Heart right ventricle (tissue), 16 donors: ENCODE measurements at regions of chrX and their contacts with region 1.

Region 1: DNA sequence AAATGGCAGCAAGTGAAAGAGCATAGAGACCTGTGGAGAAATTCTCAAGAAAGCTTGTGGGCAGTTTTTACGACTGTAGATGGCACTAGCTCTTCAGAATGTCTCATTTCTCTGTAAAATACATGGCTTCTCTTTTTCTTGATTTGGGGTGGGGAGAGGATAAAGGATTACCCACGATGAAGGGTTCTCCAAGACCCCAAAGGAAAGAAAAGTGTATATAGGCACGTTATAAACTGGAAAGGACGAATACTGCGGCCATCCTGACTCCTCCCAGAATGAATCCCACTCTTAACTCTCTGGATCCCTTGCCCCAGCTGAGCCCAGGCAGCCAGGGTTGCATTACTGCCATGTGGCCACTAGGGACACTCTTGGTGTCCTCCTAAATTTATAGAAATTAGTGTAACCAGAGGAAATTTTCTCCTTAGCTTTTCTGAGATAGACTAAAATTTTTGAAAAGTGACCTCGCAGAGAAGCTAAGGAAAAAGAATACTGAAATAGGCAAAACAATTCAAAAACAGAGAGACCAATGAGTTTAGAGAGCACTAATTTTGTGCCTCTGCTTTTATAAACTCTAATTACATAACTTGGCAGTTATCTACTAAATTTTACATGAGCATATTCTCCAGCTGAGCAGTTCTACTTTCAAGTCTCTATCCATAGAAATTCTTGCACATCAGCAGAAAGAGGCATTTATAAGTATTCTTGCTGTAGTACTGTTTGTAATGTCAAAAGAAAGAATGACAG is 37.8 kb upstream of the PCDH19 start:
- DNase-seq: peak; percentile 15 to 30
- ATAC-seq: peak in 7 of 8 donors; percentile 44 to 78 (median 58)
- H3K4me3 ChIP-seq: peak overlapping the region in 6 of 10 donors; percentile 17 to 45 (median 32)
- H3K27ac ChIP-seq: peak overlapping the region in 1 of 10 donors; percentile 19
- H3K4me1 ChIP-seq: peaks cover 0 to 14% (median 4%) of the 10 kb centered on the region in 9 donors
- H3K27me3 ChIP-seq: peaks cover 0 to 21% (median 0%) of the 10 kb centered on the region in 7 donors
- CTCF ChIP-seq: peak; percentile 51 to 92 (median 72)

Region 2: GRCh38 chrX:100368167-100368566 is 79.7 kb before region 1 on chrX:
- intact Hi-C with region 1: no loop called
- DNase-seq: no peak
- ATAC-seq: no peak
- H3K4me3 ChIP-seq: no peak overlapping the region
- H3K27ac ChIP-seq: no peak overlapping the region
- H3K4me1 ChIP-seq: no peaks in the 10 kb centered on the region
- H3K27me3 ChIP-seq: peaks cover 0 to 30% (median 0%) of the 10 kb centered on the region in 7 donors
- CTCF ChIP-seq: peak in 4 of 9 donors; percentile 14 to 41 (median 28)

Region 3: DNA sequence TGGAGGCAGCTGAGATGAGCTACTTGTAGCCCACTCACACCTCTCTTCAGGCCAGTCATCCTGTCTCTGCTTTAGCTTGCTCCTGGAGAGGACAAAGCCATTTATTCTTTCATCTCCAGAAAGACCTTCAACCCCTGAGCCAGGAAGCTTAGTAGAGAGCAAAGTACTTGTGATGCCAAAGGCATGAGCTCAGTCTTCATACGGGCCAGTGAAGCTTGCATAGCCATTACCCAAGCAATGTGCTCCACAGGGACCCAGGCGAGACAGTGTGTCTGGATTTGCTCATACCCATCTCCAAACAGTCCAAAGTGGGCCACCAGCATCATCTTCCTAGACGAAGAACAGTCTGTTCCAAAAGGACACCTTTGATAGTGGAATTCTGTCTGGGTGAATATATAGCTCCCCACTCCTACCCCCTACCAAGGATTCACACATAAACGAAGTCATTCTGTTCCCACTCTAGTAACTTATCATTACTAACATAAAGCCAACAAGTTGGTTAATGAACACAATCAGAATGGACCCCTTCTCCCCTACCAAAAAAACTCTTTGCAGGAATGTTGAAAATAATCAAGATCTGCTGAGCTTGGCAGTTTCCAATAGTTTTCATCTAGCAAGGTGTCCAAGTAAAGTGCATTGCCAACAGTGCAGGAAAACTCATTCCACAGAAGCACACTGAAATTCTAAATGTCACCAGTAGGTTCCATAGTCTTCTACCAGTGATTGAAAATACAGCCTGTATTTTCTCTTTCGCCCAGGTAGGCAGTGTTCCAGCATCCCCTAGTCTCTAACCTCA is 143.6 kb after region 1 on chrX:
- intact Hi-C with region 1: loop called in 1 of 10 experiments (anchors 10 kb)
- DNase-seq: no peak
- ATAC-seq: no peak
- H3K4me3 ChIP-seq: no peak overlapping the region
- H3K27ac ChIP-seq: no peak overlapping the region
- H3K4me1 ChIP-seq: no peaks in the 10 kb centered on the region
- H3K27me3 ChIP-seq: peaks cover 0 to 90% (median 0%) of the 10 kb centered on the region in 7 donors
- CTCF ChIP-seq: no peak

Region 4: DNA sequence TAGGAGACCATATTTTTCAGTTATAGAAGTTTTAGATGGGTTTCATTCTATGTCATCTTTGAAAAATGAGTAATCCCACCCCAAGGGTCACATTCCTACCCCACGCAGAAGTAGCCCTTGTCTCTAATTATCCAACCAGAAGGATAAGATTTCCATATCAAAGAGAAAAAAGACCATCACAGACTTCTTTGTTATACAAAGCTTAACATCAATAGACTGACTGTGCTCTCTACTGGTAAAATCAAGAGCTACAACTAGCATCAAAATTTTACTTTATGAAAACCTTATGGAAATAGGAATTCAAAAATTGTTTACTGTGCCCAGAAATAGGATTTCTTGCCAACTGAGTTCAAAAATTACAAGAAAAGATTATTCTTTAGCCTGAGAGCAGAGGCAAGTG is 161.8 kb after region 1 on chrX:
- intact Hi-C with region 1: loop called in 1 of 10 experiments (anchors 2 kb)
- DNase-seq: no peak
- ATAC-seq: no peak
- H3K4me3 ChIP-seq: no peak overlapping the region
- H3K27ac ChIP-seq: no peak overlapping the region
- H3K4me1 ChIP-seq: no peaks in the 10 kb centered on the region
- H3K27me3 ChIP-seq: peaks cover 0 to 88% (median 0%) of the 10 kb centered on the region in 7 donors
- CTCF ChIP-seq: peak in 4 of 9 donors; percentile 29 to 35 (median 32)

Region 5: DNA sequence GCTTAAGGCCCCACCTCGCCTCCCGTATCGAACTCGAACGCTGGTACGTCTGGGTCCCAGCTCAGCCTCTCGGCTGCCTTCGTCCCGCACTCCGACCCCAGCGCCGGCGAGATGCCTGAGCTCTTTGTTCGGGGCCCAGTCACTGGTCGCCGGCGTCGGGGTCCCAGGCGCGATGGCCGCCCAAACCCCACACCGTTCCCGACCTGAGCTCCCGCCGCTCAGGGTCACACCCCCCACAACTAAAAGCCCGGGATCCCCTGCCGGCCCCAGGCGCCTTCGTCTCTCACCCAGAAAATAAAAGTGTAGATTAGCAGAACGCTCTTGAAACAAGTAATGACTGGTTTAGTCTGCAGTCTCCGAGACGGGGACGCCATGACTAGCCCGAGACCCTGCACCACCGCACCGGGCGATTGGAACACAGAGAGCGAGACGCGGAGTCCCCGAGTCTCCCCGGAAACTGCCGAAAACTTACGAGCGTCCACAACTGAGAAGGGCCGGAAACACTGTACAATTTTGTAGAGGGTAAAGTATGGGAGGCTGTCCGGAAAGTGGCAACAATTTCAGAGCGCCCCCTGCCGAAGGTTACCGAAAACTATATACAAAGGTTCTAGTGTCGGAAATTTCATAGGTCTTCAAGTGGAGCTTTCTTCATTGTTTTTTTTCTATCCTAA is 188.6 kb after region 1 on chrX and contains the start of gene TSPAN6:
- intact Hi-C with region 1: loop called in 2 of 10 experiments (anchors 10 kb)
- DNase-seq: peak; percentile 80 to 83
- ATAC-seq: peak; percentile 96 to 99 (median 98)
- H3K4me3 ChIP-seq: peak within 1 kb of the TSS; percentile 30 to 75 (median 61)
- H3K27ac ChIP-seq: peak within 1 kb of the TSS in 9 of 10 donors; percentile 2 to 72 (median 39)
- H3K4me1 ChIP-seq: peaks cover 0 to 3% (median 0%) of the 10 kb centered on the region in 9 donors
- H3K27me3 ChIP-seq: peaks cover 0 to 85% (median 0%) of the 10 kb centered on the region in 7 donors
- CTCF ChIP-seq: peak; percentile 7 to 67 (median 55)
- total RNA-seq, gene TSPAN6: 3.0 to 6.5 (median 5.5) TPM

Region 6: GRCh38 chrX:100731441-100732281 is 283.8 kb after region 1 on chrX and contains the start of gene SYTL4:
- intact Hi-C with region 1: no loop called
- DNase-seq: peak; percentile 3 to 29
- ATAC-seq: peak; percentile 34 to 87 (median 80)
- H3K4me3 ChIP-seq: peak within 1 kb of the TSS; percentile 54 to 73 (median 66)
- H3K27ac ChIP-seq: peak within 1 kb of the TSS in 5 of 10 donors; percentile 41 to 62 (median 53)
- H3K4me1 ChIP-seq: no peaks in the 10 kb centered on the region
- H3K27me3 ChIP-seq: peaks cover 0 to 59% (median 0%) of the 10 kb centered on the region in 7 donors
- CTCF ChIP-seq: no peak
- total RNA-seq, gene SYTL4: 0.95 to 4.0 (median 2.0) TPM